ENCODE measurements at regions of chr6 and their contacts with region 1.

Region 1: GRCh38 chr6:133701633-133702331 is 187.1 kb upstream of the TCF21 start:
- DNase-seq: peak; percentile 81 to 97 (median 88)
- ATAC-seq: peak; percentile 97
- H3K4me3 ChIP-seq: no peak overlapping the region
- H3K27ac ChIP-seq: peak overlapping the region; percentile 85
- H3K4me1 ChIP-seq: peaks cover 4 to 29% of the 10 kb centered on the region in 2 experiments; a peak in 4 of 5 replicates
- H3K27me3 ChIP-seq: no peaks in the 10 kb centered on the region
- CTCF ChIP-seq: no peak; a peak in 1 of 6 replicates
- EP300 ChIP-seq: peak; percentile 98
- POLR2A ChIP-seq: no peak
- RAD21 ChIP-seq: peak in 1 of 2 experiments; percentile 33; a peak in 3 of 4 replicates

Region 2: DNA sequence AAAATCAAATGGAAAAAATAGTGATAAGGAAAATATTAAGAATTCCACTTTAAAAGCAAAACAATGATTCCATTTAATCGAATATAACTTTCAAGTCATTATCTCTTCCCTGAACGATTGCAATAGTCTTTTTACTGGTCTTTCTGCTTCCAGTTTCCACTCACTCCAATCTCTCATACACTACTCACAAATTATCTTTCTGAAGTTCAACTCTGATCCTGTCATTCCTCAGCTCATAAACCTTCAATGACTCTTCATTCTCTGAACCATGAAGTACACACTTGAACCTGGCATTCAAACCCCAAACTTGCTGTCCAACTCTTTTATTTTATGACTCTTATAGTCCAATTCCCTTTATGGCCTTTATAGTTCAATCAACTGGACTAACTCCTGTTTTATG is 117.0 kb before region 1 on chr6:
- CTCF ChIA-PET with region 1: no interaction called
- POLR2A ChIA-PET with region 1: no interaction called
- in situ Hi-C with region 1: no loop called
- intact Hi-C with region 1: no loop called
- DNase-seq: no peak
- ATAC-seq: no peak
- H3K4me3 ChIP-seq: no peak overlapping the region
- H3K27ac ChIP-seq: no peak overlapping the region
- H3K4me1 ChIP-seq: no peaks in the 10 kb centered on the region
- H3K27me3 ChIP-seq: no peaks in the 10 kb centered on the region
- CTCF ChIP-seq: no peak
- EP300 ChIP-seq: no peak
- POLR2A ChIP-seq: no peak
- RAD21 ChIP-seq: no peak

Region 3: DNA sequence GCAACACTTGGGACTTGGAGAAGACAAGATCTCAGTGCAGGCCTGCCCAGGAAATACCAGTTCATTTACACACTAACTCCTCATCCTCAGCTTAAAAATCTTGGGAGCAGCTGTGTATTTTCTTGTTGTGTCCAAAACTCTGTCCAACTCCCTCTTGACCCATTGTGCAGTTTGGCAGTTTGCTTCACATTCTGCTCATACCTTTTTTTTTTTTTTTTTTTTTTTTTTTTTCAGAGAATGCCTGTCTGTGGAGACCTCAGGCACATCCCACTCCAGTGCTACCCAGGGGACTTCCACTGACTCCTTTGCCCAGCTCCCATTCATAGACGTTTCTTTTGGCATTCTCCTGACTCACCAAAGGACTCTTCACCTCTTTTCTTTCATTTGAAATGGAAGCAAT is 78.7 kb before region 1 on chr6:
- CTCF ChIA-PET with region 1: no interaction called
- POLR2A ChIA-PET with region 1: no interaction called
- in situ Hi-C with region 1: no loop called
- intact Hi-C with region 1: no loop called
- DNase-seq: no peak
- ATAC-seq: no peak
- H3K4me3 ChIP-seq: no peak overlapping the region
- H3K27ac ChIP-seq: no peak overlapping the region
- H3K4me1 ChIP-seq: no peaks in the 10 kb centered on the region
- H3K27me3 ChIP-seq: no peaks in the 10 kb centered on the region
- CTCF ChIP-seq: no peak
- EP300 ChIP-seq: no peak
- POLR2A ChIP-seq: no peak
- RAD21 ChIP-seq: no peak

Region 4: GRCh38 chr6:133741375-133741861 is 39.6 kb after region 1 on chr6:
- CTCF ChIA-PET with region 1: no interaction called
- POLR2A ChIA-PET with region 1: interaction called, 4 read pairs
- in situ Hi-C with region 1: no loop called
- intact Hi-C with region 1: loop called (anchors 2 kb)
- DNase-seq: peak in 1 of 4 experiments; percentile 17
- ATAC-seq: peak; percentile 63
- H3K4me3 ChIP-seq: no peak overlapping the region
- H3K27ac ChIP-seq: no peak overlapping the region
- H3K4me1 ChIP-seq: peaks cover 3 to 13% of the 10 kb centered on the region in 2 experiments; a peak in 3 of 5 replicates
- H3K27me3 ChIP-seq: no peaks in the 10 kb centered on the region
- CTCF ChIP-seq: no peak
- EP300 ChIP-seq: no peak
- POLR2A ChIP-seq: no peak
- RAD21 ChIP-seq: no peak

Measured in K562 (cell line).